Activated CD8-positive, alpha-beta T cell treated with anti-CD3 and anti-CD28 coated beads, Interleukin-2, amount 10 ng/mL, durations not matched to agents 7 days and 5 days (primary cell): ENCODE measurements at regions of chr1 and their contacts with region 1.

Region 1: GRCh38 chr1:23634842-23635651 is 56.6 kb upstream of the RPL11 start:
- DNase-seq: peak; percentile 76
- ATAC-seq: peak; percentile 83
- H3K4me3 Mint-ChIP-seq: peak overlapping the region; percentile 63
- H3K27ac Mint-ChIP-seq: peak overlapping the region; percentile 81
- H3K4me1 Mint-ChIP-seq: peaks cover 29% of the 10 kb centered on the region
- H3K27me3 Mint-ChIP-seq: peaks cover 4% of the 10 kb centered on the region

Region 2: GRCh38 chr1:23524716-23525401 is 110.2 kb before region 1 on chr1:
- CTCF ChIA-PET with region 1: interaction called, 42 read pairs
- POLR2A ChIA-PET with region 1: interaction called, 4 read pairs
- DNase-seq: peak; percentile 67
- ATAC-seq: peak; percentile 33
- H3K4me3 Mint-ChIP-seq: peak overlapping the region; percentile 92
- H3K27ac Mint-ChIP-seq: peak overlapping the region; percentile 87
- H3K4me1 Mint-ChIP-seq: peaks cover 73% of the 10 kb centered on the region
- H3K27me3 Mint-ChIP-seq: no peaks in the 10 kb centered on the region

Region 3: DNA sequence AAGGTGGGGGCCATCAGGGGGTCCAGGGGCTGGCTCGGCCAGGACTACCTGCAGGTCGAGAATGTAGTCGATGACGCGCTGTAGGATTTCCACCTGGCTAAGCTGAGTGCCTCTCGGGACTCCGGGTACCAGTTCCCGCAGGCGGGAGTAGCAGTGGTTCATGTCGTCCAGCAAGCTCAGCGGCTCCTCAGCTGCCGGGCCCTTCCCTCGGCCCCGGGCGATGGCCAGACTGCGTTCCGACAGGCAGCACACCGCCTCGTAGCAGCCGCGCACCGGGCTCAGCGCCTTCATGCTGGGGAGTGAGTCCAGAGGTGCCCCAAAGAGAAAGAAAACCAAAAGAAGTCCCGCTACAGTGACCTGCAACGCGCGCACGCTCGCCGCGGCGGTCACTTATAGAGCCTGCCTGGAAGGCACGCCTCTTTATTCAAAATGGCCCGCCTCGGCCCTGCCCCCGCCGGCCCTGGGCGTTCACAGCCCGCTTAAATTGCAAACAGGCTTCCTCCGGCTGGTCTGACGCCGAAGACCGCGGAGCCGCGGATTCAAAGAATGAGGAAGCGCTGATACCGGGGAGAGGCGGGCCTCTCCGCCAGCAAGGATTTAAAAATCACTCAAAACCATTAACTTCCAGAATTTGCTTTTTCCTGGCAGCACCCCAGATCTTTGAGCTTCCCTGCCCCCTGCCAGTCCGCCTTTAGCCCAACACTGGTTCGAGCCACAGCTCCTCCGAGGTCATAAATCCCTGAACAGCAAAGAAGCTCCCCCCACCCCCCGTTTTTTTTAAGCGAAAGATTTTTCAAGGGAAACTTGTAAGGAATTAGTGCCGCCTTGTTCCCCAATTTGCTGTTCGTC is 75.7 kb before region 1 on chr1 and contains the start of gene ID3:
- CTCF ChIA-PET with region 1: interaction called, 1,062 read pairs
- POLR2A ChIA-PET with region 1: interaction called, 20 read pairs
- DNase-seq: peak; percentile 97
- ATAC-seq: peak; percentile 74
- H3K4me3 Mint-ChIP-seq: peak within 1 kb of the TSS; percentile 95
- H3K27ac Mint-ChIP-seq: peak within 1 kb of the TSS; percentile 87
- H3K4me1 Mint-ChIP-seq: peaks cover 70% of the 10 kb centered on the region
- H3K27me3 Mint-ChIP-seq: peaks cover 34% of the 10 kb centered on the region
- total RNA-seq, gene ID3: 31.4 to 34.4 TPM

Region 4: DNA sequence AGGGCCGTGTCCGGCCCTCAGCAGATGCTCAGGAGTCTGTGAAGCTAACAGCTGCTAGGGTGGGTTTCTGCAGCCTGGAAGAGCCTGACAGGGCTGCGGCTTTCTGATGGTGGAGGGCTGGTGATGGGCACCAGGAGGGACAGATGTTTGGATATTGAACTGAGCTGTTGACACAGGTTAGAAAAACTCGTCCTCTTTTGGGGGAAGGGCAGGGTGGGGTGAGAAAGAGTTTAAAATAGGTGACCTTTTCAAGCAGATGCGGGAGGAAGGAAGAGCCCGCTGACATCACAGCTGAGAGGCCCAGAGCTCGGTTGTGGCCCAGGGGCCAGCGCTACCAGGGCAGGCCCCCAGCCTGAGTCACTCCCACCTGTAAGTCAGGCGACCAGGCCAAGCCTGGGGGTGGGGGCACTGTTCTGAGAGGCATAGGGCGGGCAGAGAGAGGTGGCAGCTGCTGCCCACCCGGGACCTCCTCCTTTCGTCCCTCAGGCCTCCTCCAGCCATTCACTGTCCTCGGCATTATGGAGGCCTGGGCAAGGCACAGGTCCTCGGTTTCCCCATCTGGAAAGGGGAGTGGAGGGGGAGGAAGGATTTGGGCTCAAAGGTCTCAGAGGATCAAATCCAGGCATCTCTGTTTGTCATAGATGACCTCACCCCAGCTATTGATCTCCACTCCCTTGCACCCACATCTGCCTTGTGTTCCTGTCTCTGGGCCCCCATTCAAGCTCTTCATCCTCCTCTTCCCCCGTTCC is 43.4 kb before region 1 on chr1:
- CTCF ChIA-PET with region 1: interaction called, 133 read pairs
- POLR2A ChIA-PET with region 1: interaction called, 5 read pairs
- DNase-seq: peak; percentile 70
- ATAC-seq: peak; percentile 76
- H3K4me3 Mint-ChIP-seq: peak overlapping the region; percentile 43
- H3K27ac Mint-ChIP-seq: peak overlapping the region; percentile 91
- H3K4me1 Mint-ChIP-seq: peaks cover 78% of the 10 kb centered on the region
- H3K27me3 Mint-ChIP-seq: no peaks in the 10 kb centered on the region

Region 5: DNA sequence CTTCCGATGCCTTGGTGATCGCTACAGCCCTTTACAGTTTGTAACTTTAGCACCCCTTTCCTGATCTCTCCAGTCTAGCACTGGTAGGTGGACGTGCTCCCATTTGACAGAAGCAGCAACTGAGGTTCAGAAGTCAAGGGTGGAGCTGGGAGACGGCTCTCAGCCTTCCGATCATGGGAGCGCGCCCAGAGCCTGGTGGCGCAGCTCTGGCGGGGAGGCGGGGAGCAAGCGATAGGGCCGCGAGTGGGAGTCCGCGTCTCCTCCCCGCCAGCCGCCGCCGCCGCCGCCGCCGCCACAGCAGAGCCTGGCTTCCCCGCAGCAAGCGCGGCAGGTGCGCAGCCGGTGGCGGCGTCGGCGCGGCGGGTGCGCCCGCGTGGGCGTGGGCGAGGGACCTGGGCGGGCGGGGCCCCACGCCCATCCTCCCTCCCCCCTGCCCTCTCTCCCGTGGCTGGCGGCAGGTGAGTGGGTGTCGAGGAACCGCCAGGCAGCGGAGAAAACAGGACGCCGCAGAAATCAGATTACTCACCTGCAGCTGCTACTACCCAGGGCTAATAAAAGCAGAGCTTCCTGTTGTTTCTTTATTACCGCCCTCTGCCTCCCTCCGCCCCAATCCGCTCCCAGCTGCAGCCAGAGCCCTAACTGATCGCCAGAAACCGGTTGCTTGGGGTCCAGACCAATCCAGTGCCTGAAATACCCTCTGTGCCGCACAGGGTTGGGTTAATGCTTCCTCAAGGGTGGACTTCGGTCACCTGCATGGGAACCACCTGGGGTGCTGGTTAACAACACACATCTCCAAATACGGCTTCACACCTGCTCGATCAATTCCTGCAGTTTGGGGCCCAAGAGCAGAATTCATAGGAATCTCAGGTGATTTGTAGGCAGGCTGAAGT is 15.5 kb before region 1 on chr1:
- CTCF ChIA-PET with region 1: interaction called, 121 read pairs
- POLR2A ChIA-PET with region 1: interaction called, 3 read pairs
- DNase-seq: peak; percentile 80
- ATAC-seq: peak; percentile 77
- H3K4me3 Mint-ChIP-seq: peak overlapping the region; percentile 75
- H3K27ac Mint-ChIP-seq: peak overlapping the region; percentile 81
- H3K4me1 Mint-ChIP-seq: peaks cover 72% of the 10 kb centered on the region
- H3K27me3 Mint-ChIP-seq: no peaks in the 10 kb centered on the region

Region 6: GRCh38 chr1:24108334-24109165 is 473.5 kb after region 1 on chr1:
- CTCF ChIA-PET with region 1: no interaction called
- POLR2A ChIA-PET with region 1: no interaction called
- DNase-seq: no peak
- ATAC-seq: no peak
- H3K4me3 Mint-ChIP-seq: no peak overlapping the region
- H3K27ac Mint-ChIP-seq: no peak overlapping the region
- H3K4me1 Mint-ChIP-seq: peaks cover 7% of the 10 kb centered on the region
- H3K27me3 Mint-ChIP-seq: peaks cover 17% of the 10 kb centered on the region